ENCODE measurements at regions of chr1 and their contacts with region 1.

Region 1: GRCh38 chr1:244858357-244858756 is 6.0 kb downstream of the HNRNPU start:
- DNase-seq: no peak
- ATAC-seq: no peak
- H3K4me3 ChIP-seq: peak overlapping the region; percentile 97
- H3K27ac ChIP-seq: peak overlapping the region; percentile 4
- H3K4me1 ChIP-seq: peaks cover 63% of the 10 kb centered on the region
- H3K27me3 ChIP-seq: no peaks in the 10 kb centered on the region
- CTCF ChIP-seq: no peak

Region 2: DNA sequence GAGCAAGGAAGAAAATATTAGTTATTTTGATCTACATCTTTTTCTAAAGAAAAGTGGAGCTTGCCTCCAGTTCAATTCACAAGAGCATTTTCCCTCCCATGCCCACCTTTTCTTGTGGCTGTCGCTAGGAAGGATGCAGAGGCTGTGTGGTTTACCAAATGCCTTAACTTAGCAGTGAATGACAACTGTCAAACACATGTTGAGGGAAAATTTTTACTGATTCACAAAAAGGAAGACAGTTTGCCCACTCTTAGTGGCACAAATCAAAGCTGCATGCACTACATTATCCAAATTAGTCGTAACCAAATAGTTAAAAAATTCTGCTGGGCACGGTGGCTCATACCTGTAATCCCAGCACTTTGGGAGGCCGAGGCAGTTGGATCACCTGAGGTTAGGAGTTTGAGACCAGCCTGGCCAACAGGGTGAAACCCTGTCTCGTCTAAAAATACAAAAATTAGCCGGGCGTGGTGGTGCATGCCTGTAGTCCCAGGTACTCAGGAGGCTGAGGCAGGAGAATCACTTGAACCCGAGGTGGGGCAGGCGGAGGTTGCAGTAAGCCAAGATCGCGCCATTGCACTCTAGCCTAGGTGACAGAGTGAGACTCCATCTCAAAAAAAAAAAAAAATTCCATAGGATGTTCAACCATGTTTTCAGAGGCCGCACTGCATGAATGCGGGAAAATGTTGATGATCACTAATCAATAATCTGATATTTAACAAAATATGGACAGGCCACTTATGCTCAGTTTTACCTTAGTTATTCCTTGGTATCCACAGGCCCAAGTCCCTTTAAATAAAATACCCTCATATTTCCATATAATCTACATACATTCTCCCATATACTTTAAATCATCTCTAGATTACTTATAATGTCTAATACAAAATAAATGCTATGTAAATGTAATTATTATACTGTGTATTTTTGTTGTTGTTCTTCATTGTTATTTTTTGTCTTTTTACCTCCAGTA is 13.9 kb before region 1 on chr1:
- intact Hi-C with region 1: loop called in 1 of 2 experiments (anchors 2 kb)
- DNase-seq: no peak
- ATAC-seq: no peak
- H3K4me3 ChIP-seq: no peak overlapping the region
- H3K27ac ChIP-seq: no peak overlapping the region
- H3K4me1 ChIP-seq: peaks cover 21% of the 10 kb centered on the region
- H3K27me3 ChIP-seq: no peaks in the 10 kb centered on the region
- CTCF ChIP-seq: no peak

Region 3: GRCh38 chr1:244881552-244882280 is 23.4 kb after region 1 on chr1:
- intact Hi-C with region 1: no loop called
- DNase-seq: no peak
- ATAC-seq: no peak
- H3K4me3 ChIP-seq: no peak overlapping the region
- H3K27ac ChIP-seq: peak overlapping the region; percentile 30
- H3K4me1 ChIP-seq: no peaks in the 10 kb centered on the region
- H3K27me3 ChIP-seq: no peaks in the 10 kb centered on the region
- CTCF ChIP-seq: no peak

Region 4: DNA sequence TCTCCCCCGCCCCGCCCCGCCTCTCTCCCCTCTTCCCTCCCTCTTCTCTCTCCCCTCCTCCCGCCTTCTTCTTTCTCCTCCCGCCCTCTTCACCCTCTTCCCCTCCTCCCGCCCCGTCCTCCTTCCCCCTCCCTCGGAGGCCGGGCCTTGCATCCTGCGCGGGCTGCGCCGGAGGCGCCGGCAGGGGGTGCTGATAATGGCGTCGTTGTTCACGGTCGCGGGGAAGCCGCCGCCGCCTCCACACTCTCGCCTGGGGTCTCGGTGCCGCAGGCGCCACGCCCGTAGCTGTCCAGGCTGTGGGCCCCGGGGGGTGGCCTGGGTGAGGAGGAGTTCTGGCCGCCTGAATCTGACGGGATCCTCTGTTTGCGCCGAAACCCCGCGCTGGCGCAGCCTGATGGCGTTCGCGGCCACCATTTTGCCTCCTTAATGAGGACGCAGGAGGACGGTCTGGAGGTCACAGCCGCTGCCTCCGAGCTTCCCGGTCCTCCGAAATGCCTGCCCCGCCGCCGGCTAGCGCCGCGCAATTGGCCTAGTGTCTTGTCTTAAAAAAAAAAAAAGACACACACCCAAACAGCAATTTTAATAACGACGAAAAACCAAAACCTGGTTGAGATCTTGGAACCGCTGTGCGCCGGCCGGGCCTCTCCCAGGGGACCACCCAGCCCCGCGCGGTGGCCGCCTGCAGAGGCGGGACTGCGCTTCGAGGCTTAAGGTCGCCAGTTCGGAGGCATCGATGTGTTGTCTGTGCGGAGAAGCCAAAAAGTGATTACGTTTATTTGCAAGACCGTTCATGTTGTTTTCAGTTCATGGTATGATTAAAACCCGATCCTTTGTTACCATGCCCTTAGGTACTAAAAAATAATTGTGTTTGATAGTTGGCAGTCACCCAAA is 112.5 kb after region 1 on chr1:
- intact Hi-C with region 1: no loop called
- DNase-seq: peak; percentile 94 to 97
- ATAC-seq: peak; percentile 84 to 88 (median 86)
- H3K4me3 ChIP-seq: peak overlapping the region; percentile 73
- H3K27ac ChIP-seq: peak overlapping the region; percentile 98
- H3K4me1 ChIP-seq: peaks cover 23% of the 10 kb centered on the region
- H3K27me3 ChIP-seq: no peaks in the 10 kb centered on the region
- CTCF ChIP-seq: peak; percentile 45

Measured in psoas muscle (tissue), 8 donors.